Calu3 (cell line): ENCODE measurements at regions of chr3 and their contacts with region 1.

Region 1: DNA sequence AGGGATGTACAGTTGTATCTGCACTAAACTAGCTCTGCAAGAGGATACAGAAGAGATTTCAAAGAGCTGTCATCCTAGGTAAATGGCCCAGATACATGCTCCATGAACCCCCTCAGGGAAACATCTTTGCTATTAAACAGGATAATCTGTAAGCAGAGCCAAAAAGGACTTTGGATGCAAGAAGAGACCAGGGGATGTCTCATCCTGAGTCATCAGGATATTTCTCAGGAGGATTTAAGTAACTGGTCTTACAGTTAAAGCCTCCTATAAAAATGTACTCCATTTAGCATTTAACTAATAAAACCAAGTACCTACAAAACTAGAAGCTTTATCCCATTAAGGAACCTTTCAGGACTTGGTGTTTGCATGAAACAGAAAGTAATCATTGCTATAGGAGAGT is 48.2 kb upstream of the PHLDB2 start:
- DNase-seq: no peak
- H3K4me3 Mint-ChIP-seq: no peak overlapping the region
- H3K27ac Mint-ChIP-seq: no peak overlapping the region
- H3K4me1 Mint-ChIP-seq: peaks cover 27% of the 10 kb centered on the region
- H3K27me3 Mint-ChIP-seq: no peaks in the 10 kb centered on the region
- CTCF ChIP-seq: no peak

Region 2: DNA sequence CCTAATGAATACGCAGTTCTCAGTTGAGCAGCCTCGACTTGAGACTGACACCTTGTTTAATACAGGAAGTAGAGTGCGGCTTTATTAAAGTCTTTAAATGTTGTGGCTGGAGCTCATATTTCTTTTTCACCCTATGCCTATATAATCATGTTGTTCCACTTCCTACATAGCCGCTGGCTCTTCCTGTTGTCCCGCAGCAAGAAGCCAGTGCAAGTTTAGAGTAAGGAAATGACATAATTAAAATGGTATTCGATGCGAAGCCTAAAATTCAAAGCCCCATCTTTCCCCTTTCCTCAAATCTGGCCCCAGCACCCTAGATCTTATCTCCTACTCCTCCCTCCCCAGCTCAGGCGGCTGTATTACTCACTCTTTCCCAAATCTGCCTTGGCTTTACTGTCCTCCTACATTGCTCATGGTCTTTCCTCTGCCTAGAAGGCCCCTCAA is 40.6 kb after region 1 on chr3:
- CTCF ChIA-PET with region 1: interaction called, 3 read pairs
- intact Hi-C with region 1: loop called (anchors 5 kb)
- DNase-seq: no peak
- H3K4me3 Mint-ChIP-seq: no peak overlapping the region
- H3K27ac Mint-ChIP-seq: no peak overlapping the region
- H3K4me1 Mint-ChIP-seq: peaks cover 11% of the 10 kb centered on the region
- H3K27me3 Mint-ChIP-seq: no peaks in the 10 kb centered on the region
- CTCF ChIP-seq: no peak